ENCODE measurements at regions of chr17 and their contacts with region 1.

Region 1: DNA sequence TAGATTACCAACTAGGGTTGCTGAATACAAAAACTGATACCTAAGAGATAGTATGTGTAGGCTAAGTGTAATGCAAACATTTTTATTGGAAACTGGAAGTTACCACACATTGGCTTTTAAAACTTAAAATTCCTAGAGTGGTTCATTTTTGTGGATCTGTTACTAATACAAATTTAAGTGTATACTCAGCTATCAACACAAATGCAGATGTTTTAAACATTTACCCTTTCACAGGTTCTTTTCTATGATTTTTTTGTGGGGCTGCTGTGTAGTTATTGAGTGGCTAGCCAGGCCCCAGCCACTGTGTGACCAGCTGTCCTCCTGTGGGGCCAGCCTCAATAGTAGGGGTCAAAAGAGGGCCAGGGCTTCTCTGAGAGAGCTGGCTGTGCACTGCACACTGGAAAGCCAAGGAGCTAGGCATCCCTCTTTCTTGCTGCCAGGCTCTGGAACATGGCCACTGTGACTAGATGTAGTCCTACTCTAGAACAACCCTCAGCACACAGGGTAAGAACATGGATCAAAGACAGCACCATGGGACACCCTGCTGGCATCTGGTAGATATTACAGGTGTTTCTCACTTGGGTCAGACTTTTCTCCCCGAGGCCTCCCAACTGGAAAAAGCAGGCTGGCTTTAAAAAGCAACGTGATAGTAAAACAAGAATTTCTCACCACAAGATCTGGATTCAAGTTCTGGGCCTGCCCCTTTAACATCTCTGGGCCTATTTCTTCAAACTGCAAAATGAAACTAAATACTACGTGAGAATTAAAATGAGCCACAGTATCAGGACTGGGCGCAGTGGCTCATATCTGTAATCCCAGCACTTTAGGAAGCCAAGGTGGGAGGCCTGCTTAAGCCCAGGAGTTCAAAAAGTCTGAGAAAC is 7.3 kb upstream of the VEZF1 start:
- DNase-seq: peak; percentile 22
- ATAC-seq: peak; percentile 94
- H3K4me3 Mint-ChIP-seq: no peak overlapping the region
- H3K27ac Mint-ChIP-seq: peak overlapping the region; percentile 46
- H3K4me1 Mint-ChIP-seq: peaks cover 38% of the 10 kb centered on the region
- H3K27me3 Mint-ChIP-seq: no peaks in the 10 kb centered on the region
- CTCF ChIP-seq: peak; percentile 25

Region 2: DNA sequence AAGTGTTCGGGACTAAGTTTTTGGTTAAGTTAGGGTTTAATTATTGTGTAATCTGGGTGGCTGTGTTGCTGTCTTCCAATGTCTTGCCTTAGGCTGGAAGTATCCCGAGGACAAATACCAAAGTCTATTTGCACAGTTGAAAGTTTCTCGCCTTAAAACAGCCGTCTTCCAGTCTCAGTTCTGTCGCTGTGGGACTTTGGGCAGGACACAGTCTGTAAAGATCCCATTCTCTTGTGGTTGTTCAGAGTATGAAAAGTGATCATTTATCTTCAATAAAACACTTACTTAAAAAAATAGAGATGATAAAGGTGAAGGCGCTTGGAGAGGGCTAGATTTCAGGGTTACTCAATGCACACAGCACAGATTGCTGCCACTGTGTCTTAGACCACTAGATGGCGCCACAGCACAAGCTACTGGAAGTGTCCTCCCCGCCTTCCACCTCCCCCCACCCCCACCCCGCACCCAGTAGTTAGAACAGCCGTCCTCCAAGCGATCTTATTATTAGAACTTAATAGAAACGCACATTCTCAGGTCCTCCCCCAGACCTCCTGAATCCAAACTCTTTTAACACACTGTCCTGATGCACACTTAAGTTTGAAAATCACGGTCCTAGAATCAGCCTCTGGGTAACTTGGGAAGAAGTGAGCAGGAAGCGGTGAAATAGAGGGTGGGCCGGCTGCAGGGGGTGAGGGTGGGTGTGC is 864.4 kb before region 1 on chr17:
- CTCF ChIA-PET with region 1: interaction called, 4 read pairs
- POLR2A ChIA-PET with region 1: no interaction called
- intact Hi-C with region 1: loop called (anchors 1 kb)
- DNase-seq: peak; percentile 52
- ATAC-seq: peak; percentile 91
- H3K4me3 Mint-ChIP-seq: no peak overlapping the region
- H3K27ac Mint-ChIP-seq: no peak overlapping the region
- H3K4me1 Mint-ChIP-seq: peaks cover 13% of the 10 kb centered on the region
- H3K27me3 Mint-ChIP-seq: peaks cover 3% of the 10 kb centered on the region
- CTCF ChIP-seq: no peak

Region 3: DNA sequence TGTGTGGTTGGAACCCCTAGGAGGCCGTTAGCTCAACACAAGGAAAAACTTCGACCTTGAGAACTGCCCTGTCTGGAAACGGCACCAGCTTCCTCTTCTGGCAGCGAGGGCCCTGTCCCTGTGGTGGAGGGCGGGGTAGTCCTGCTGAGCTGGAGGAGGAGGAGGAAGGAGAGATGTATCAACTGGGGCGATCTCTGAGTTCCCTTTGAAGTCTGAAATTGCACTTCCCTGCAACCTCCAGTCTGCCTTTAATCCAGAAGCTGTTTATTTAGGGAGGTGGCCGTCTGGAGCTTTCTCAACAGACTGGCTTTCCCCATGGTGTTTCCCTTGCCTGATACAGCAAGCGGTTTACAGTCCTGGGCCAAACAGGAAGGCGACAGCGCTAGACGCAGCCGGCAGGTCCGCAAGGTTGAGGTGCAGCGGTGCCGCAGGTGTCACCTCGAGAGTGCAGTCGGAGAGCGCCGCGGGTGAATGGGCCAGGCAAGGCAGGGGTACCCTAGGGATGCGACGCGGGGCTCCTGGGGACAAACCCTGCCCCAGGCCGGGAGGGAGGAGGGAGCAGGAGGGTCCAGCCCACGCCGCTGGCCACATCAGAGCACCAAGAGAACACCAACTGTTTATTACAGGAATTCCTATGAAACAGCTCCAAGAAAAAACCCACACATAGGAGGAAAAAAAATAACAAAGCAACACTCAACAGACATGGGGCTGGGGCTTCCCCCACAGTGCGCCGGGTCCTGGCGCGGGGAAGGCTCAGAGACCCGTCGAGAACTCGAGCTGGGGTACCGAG is 134.1 kb before region 1 on chr17:
- CTCF ChIA-PET with region 1: interaction called, 242 read pairs
- POLR2A ChIA-PET with region 1: interaction called, 17 read pairs
- intact Hi-C with region 1: loop called (anchors 1 kb)
- DNase-seq: no peak
- ATAC-seq: peak; percentile 69
- H3K4me3 Mint-ChIP-seq: peak overlapping the region; percentile 79
- H3K27ac Mint-ChIP-seq: no peak overlapping the region
- H3K4me1 Mint-ChIP-seq: peaks cover 14% of the 10 kb centered on the region
- H3K27me3 Mint-ChIP-seq: peaks cover 21% of the 10 kb centered on the region
- CTCF ChIP-seq: no peak

Region 4: GRCh38 chr17:57892146-57892828 is 103.0 kb before region 1 on chr17:
- CTCF ChIA-PET with region 1: interaction called, 112 read pairs
- POLR2A ChIA-PET with region 1: no interaction called
- intact Hi-C with region 1: loop called (anchors 1 kb)
- DNase-seq: peak; percentile 77
- ATAC-seq: peak; percentile 98
- H3K4me3 Mint-ChIP-seq: no peak overlapping the region
- H3K27ac Mint-ChIP-seq: no peak overlapping the region
- H3K4me1 Mint-ChIP-seq: no peaks in the 10 kb centered on the region
- H3K27me3 Mint-ChIP-seq: peaks cover 36% of the 10 kb centered on the region
- CTCF ChIP-seq: peak; percentile 62

Region 5: GRCh38 chr17:57939797-57940196 is 55.5 kb before region 1 on chr17:
- CTCF ChIA-PET with region 1: interaction called, 9 read pairs
- POLR2A ChIA-PET with region 1: interaction called, 12 read pairs
- intact Hi-C with region 1: no loop called
- DNase-seq: peak; percentile 68
- ATAC-seq: peak; percentile 94
- H3K4me3 Mint-ChIP-seq: peak overlapping the region; percentile 50
- H3K27ac Mint-ChIP-seq: peak overlapping the region; percentile 35
- H3K4me1 Mint-ChIP-seq: peaks cover 34% of the 10 kb centered on the region
- H3K27me3 Mint-ChIP-seq: peaks cover 47% of the 10 kb centered on the region
- CTCF ChIP-seq: no peak

Measured in activated B cell treated with CpG ODN at 0.5 μM for 24 hours (primary cell).